ENCODE measurements at regions of chr11 and their contacts with region 1.

Region 1: DNA sequence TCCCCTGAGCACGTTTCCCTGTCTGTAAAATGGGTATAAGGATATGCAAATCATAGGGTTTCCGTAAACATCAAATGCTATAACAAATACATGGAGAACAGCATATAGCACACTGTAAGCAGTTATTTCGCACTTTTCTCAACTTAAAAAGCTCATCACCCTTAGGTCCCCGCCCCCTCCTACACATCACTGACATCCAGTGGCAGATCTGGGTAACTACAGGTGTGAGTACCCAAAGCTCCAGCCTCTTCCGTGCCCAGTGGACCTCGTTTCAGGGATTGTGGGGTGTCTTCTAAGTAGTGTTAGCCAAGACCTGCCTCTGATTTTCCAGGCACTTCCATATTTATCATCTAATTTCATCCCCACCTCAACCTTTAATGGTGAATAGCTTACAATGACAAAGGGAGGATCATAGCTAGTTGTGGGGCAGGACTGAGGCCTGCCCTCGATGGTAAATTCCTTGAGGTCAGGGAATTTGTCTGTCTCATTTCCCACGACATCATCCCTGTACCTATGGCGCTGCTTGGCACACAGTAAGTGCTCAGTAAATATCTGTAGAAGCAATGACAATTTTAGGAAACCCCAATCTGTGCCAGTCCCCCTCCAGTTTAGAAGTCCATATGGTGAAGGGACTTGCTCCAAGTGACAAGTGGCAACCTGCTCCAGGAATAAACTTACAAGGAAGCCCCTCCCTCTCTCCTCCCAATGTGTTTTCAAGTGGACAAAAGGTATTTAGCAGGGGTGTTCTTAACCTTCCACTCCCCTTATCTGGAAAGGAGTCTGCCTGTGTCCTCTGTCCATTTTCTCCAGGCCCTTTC is 340.5 kb downstream of the TENM4 start:
- DNase-seq: peak in 1 of 2 experiments; percentile 57
- H3K4me3 ChIP-seq: no peak overlapping the region
- H3K27ac ChIP-seq: no peak overlapping the region
- H3K4me1 ChIP-seq: no peaks in the 10 kb centered on the region
- H3K27me3 ChIP-seq: no peaks in the 10 kb centered on the region
- CTCF ChIP-seq: peak; percentile 65 to 80 (median 74)
- EP300 ChIP-seq: no peak
- POLR2A ChIP-seq: no peak
- RAD21 ChIP-seq: peak; percentile 88 to 90

Region 2: GRCh38 chr11:79045800-79046304 is 54.5 kb before region 1 on chr11:
- CTCF ChIA-PET with region 1: interaction called, 72 read pairs
- POLR2A ChIA-PET with region 1: no interaction called
- DNase-seq: no peak
- H3K4me3 ChIP-seq: no peak overlapping the region
- H3K27ac ChIP-seq: no peak overlapping the region
- H3K4me1 ChIP-seq: no peaks in the 10 kb centered on the region
- H3K27me3 ChIP-seq: no peaks in the 10 kb centered on the region
- CTCF ChIP-seq: no peak
- EP300 ChIP-seq: no peak
- POLR2A ChIP-seq: no peak
- RAD21 ChIP-seq: no peak

Region 3: DNA sequence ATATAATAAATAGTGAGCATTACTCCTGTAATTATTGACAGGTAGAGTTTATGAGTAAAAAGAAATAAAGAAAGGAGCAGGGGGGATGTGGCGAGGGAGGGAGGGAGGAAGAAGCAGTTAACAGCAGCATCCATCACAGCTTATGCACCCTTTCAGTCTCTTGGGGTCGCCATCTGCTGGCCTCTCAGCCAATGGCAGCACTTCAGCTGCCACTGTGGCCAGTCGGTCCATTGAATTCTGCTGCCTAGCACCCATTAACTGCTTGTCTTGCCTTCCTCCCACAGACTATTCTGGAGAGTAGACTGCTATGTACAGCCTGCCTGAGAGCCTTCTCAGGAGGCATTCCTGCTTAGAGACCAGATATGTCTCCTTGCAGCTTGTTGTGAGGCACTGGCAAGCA is 47.8 kb before region 1 on chr11:
- CTCF ChIA-PET with region 1: interaction called, 72 read pairs
- POLR2A ChIA-PET with region 1: no interaction called
- DNase-seq: no peak
- H3K4me3 ChIP-seq: no peak overlapping the region
- H3K27ac ChIP-seq: no peak overlapping the region
- H3K4me1 ChIP-seq: no peaks in the 10 kb centered on the region
- H3K27me3 ChIP-seq: no peaks in the 10 kb centered on the region
- CTCF ChIP-seq: peak; percentile 33 to 66 (median 50)
- EP300 ChIP-seq: no peak
- POLR2A ChIP-seq: no peak
- RAD21 ChIP-seq: peak; percentile 44 to 49

Region 4: GRCh38 chr11:79062814-79063762 is 37.2 kb before region 1 on chr11:
- CTCF ChIA-PET with region 1: interaction called, 32 read pairs
- POLR2A ChIA-PET with region 1: no interaction called
- DNase-seq: peak; percentile 31 to 64
- H3K4me3 ChIP-seq: no peak overlapping the region
- H3K27ac ChIP-seq: no peak overlapping the region
- H3K4me1 ChIP-seq: peaks cover 9 to 29% (median 14%) of the 10 kb centered on the region in 4 experiments
- H3K27me3 ChIP-seq: no peaks in the 10 kb centered on the region
- CTCF ChIP-seq: peak; percentile 42 to 55 (median 45)
- EP300 ChIP-seq: no peak
- POLR2A ChIP-seq: no peak
- RAD21 ChIP-seq: peak; percentile 40 to 56

Region 5: DNA sequence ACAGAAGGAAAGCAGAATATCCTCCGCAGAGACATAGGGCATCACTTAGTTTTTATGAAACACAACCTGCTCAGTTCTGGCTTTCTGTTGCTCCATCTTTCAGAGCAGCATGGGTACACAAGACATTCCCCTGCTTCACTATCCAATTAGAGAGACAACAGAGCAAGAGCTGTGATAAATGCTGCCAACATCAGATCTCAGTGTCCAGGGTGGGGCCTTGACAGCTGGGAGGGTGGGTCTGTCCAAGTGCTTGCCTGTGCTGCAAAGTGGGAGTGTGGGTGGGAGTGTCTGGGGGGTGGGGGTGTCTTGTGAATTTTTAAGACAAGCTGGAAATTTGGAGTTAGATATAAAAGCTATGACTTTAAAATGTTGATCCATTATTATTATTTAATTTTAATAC is 29.1 kb before region 1 on chr11:
- CTCF ChIA-PET with region 1: interaction called, 32 read pairs
- POLR2A ChIA-PET with region 1: no interaction called
- DNase-seq: no peak
- H3K4me3 ChIP-seq: no peak overlapping the region
- H3K27ac ChIP-seq: no peak overlapping the region
- H3K4me1 ChIP-seq: peaks cover 2 to 22% (median 8%) of the 10 kb centered on the region in 4 experiments
- H3K27me3 ChIP-seq: no peaks in the 10 kb centered on the region
- CTCF ChIP-seq: no peak
- EP300 ChIP-seq: no peak
- POLR2A ChIP-seq: no peak
- RAD21 ChIP-seq: no peak

Region 6: GRCh38 chr11:79076526-79077115 is 23.7 kb before region 1 on chr11:
- CTCF ChIA-PET with region 1: interaction called, 37 read pairs
- POLR2A ChIA-PET with region 1: no interaction called
- DNase-seq: no peak
- H3K4me3 ChIP-seq: no peak overlapping the region
- H3K27ac ChIP-seq: no peak overlapping the region
- H3K4me1 ChIP-seq: peaks cover 2 to 11% (median 4%) of the 10 kb centered on the region in 4 experiments
- H3K27me3 ChIP-seq: no peaks in the 10 kb centered on the region
- CTCF ChIP-seq: peak; percentile 68 to 76 (median 68)
- EP300 ChIP-seq: no peak
- POLR2A ChIP-seq: no peak
- RAD21 ChIP-seq: peak; percentile 60 to 66

Region 7: GRCh38 chr11:79113054-79113690 is 12.9 kb after region 1 on chr11:
- CTCF ChIA-PET with region 1: interaction called, 42 read pairs
- POLR2A ChIA-PET with region 1: interaction called, 3 read pairs
- DNase-seq: no peak
- H3K4me3 ChIP-seq: no peak overlapping the region
- H3K27ac ChIP-seq: no peak overlapping the region
- H3K4me1 ChIP-seq: peaks cover 0 to 5% (median 0%) of the 10 kb centered on the region in 4 experiments; a peak in 2 of 7 replicates
- H3K27me3 ChIP-seq: no peaks in the 10 kb centered on the region; a peak in 1 of 7 replicates
- CTCF ChIP-seq: no peak
- EP300 ChIP-seq: no peak
- POLR2A ChIP-seq: no peak
- RAD21 ChIP-seq: no peak

Measured in H1 (cell line).